ENCODE measurements at regions of chr16 and their contacts with region 1.

Region 1: GRCh38 chr16:51982715-51983680 is 563.9 kb downstream of the TOX3 start:
- DNase-seq: peak; percentile 44
- ATAC-seq: no peak
- H3K4me3 Mint-ChIP-seq: no peak overlapping the region
- H3K27ac Mint-ChIP-seq: no peak overlapping the region
- H3K4me1 Mint-ChIP-seq: no peaks in the 10 kb centered on the region
- H3K27me3 Mint-ChIP-seq: no peaks in the 10 kb centered on the region

Region 2: DNA sequence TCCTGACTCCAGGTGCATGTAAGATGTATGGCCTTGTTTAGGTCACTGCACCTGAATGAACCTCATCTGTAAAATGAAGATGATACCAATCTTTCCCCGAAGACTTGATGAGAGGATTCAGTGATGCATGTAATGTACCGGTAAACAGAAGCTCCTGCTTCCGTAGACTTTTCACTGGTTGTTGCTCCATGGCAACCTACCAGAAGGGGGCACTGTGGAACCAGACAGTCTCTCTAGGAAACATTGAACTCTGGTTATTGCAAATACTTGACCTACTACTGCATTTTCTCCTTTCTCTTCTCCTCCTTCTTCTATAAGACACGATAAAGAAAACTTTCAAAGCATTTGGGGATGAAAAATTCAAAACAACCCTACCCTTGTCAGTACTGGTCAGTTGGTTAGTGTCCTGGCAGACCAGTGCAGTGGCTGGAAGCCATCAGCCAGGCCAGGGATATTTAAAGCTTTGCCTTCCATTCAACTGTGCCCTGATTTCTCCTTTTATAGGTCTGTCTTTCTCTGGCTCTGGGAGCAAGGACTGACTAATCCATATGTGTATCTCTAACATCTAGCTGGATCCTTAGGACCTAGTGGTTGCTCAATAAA is 164.6 kb before region 1 on chr16:
- CTCF ChIA-PET with region 1: interaction called, 13 read pairs
- POLR2A ChIA-PET with region 1: no interaction called
- DNase-seq: peak; percentile 27
- ATAC-seq: no peak
- H3K4me3 Mint-ChIP-seq: no peak overlapping the region
- H3K27ac Mint-ChIP-seq: no peak overlapping the region
- H3K4me1 Mint-ChIP-seq: no peaks in the 10 kb centered on the region
- H3K27me3 Mint-ChIP-seq: no peaks in the 10 kb centered on the region

Measured in activated CD8-positive, alpha-beta T cell treated with anti-CD3 and anti-CD28 coated beads, Interleukin-2, amount 10 ng/mL, durations not matched to agents 7 days and 5 days (primary cell).